ENCODE measurements at regions of chr1 and their contacts with region 1.

Region 1: DNA sequence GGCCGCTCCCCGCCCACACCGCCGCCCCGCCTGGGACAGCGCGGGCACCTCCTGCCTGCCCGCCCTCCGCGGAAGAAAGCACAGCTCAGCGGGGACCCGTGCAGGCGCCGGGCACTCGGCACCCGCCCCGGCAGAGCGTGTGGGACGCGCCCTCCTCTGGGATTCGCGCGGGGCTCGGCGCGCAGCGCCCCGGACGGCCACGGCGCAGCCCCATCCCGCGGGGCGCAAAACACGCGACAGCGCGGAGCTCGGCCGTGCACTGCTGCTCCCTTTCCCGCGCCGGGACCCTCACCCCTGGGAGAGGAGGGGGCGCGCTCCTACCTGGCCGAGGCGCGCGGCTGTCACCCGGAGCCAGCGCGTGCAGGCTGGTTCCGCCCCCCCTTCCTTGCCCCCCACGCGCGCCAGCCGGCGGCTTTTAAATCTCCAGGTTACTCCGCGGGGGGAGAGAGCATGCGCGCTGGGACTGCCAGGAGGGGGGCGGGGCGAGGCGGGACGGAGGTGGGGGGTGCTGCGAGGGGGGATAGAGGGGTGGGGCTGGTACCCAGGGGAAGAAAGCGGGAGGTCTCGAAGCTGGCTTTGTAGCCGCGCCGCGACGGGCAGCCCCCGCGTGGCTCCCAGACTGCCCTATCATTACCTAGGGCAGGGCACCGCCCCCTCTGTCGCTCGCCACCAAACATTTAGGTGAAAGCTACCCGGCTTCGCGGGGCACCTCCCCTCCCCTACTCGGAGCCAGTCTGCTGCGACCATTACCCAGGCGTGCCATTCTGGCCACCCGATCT is at the start of gene SLC45A3:
- DNase-seq: no peak
- H3K4me3 ChIP-seq: peak within 1 kb of the TSS; percentile 76 to 86
- H3K27ac ChIP-seq: peak within 1 kb of the TSS; percentile 78 to 88
- H3K4me1 ChIP-seq: peaks cover 0 to 21% of the 10 kb centered on the region in 2 donors
- H3K27me3 ChIP-seq: no peaks in the 10 kb centered on the region
- CTCF ChIP-seq: no peak
- total RNA-seq, gene SLC45A3: 3.4 TPM

Region 2: DNA sequence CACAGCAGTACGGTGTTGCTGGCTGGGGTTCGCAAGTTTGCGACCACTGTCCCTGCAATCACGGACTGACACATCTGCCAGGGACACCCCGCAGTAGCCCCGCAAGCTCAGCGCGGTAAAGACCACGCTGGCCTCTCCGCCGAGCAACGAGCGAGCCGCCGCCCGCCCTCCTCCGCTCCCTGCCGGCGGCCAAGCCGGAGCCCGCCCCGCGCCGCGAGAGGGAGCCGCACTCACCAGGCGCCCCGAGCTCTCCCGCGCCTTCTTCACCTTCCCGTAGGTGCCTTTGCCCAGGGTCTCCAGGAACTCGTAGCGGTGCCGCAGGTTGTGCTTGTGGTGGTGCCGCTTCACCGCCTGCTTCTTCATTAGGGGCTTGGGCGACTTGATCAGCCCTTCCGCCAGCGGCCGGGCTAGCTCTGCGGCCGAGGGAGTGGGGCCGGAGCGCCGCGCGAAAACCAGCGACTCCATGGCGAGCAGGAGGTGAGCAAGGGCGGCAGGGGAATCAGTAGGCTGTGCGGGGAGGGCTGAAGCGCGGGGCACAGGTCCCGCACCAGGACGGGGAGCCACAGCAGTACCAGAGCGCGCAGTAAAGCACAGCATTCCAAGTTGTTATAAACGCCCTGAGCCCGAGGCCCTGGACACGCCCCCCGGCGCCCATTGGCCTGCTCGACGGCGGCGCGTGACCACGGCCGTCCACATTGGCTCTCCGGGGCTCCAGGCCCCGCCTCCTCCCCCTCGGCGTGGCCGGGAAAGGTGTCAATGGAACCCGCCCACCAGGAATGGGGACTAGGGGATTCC is 358.9 kb before region 1 on chr1 and contains the start of gene NUAK2:
- intact Hi-C with region 1: no loop called
- DNase-seq: peak; percentile 63 to 92
- H3K4me3 ChIP-seq: peak within 1 kb of the TSS; percentile 79 to 87
- H3K27ac ChIP-seq: peak within 1 kb of the TSS; percentile 21 to 40
- H3K4me1 ChIP-seq: peaks cover 0 to 21% of the 10 kb centered on the region in 2 donors
- H3K27me3 ChIP-seq: no peaks in the 10 kb centered on the region
- CTCF ChIP-seq: peak in 2 of 3 experiments; percentile 17 to 37
- total RNA-seq, gene NUAK2: 0.85 TPM

Region 3: GRCh38 chr1:205711104-205712020 is 31.1 kb after region 1 on chr1:
- intact Hi-C with region 1: loop called (anchors 5 kb)
- DNase-seq: peak in 1 of 2 donors; percentile 86
- H3K4me3 ChIP-seq: no peak overlapping the region
- H3K27ac ChIP-seq: peak overlapping the region in 1 of 2 donors; percentile 65
- H3K4me1 ChIP-seq: peaks cover 0 to 5% of the 10 kb centered on the region in 2 donors
- H3K27me3 ChIP-seq: no peaks in the 10 kb centered on the region
- CTCF ChIP-seq: peak; percentile 69 to 87 (median 85)

Measured in ascending aorta (tissue), 2 donors.